Activated B cell treated with CpG ODN at 0.5 μM for 24 hours (primary cell): ENCODE measurements at regions of chr11 and their contacts with region 1.

Region 1: DNA sequence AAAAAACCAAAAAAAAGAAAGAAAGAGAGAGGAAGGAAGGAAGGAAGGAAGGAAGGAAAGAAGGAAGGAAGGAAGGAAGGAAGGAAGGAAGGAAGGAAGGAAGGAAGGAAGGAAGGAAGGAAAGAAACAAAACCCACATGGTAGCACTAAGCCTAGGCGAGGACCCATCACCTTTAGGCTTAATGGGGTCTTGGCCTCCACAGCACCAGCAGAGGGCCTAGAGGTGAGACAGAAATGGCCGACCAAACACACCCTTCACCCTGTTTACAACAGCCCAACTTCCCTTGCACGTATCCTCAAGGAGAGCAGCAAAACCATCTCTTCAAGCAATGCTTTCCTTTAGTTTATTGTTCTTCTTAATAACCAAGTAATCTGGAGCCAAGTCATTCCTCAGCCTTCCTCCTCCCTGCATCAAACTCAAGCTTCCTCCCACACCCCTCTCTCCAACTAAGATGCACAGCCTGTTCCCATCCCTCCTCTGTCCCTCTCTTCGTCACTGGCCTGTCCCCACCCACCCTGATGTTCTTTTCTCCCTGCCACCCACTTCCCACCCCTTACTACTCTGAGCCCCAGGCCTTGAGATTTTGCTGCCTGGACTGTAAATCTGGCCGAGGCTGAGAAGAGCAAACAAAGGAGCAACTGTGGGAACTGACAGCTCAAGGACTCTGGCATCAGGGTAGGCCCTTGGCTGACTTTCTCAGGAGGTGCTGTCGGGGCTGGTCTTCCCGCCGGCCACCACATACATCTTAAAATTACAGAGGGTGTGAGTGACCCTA is 26.0 kb downstream of the POU2AF1 start:
- DNase-seq: no peak
- ATAC-seq: peak; percentile 53
- H3K4me3 Mint-ChIP-seq: no peak overlapping the region
- H3K27ac Mint-ChIP-seq: peak overlapping the region; percentile 83
- H3K4me1 Mint-ChIP-seq: peaks cover 62% of the 10 kb centered on the region
- H3K27me3 Mint-ChIP-seq: no peaks in the 10 kb centered on the region
- CTCF ChIP-seq: no peak

Region 2: GRCh38 chr11:111367411-111368284 is 14.5 kb after region 1 on chr11:
- CTCF ChIA-PET with region 1: interaction called, 3 read pairs
- POLR2A ChIA-PET with region 1: interaction called, 11 read pairs
- intact Hi-C with region 1: loop called (anchors 2 kb)
- DNase-seq: no peak
- ATAC-seq: peak; percentile 51
- H3K4me3 Mint-ChIP-seq: peak overlapping the region; percentile 67
- H3K27ac Mint-ChIP-seq: peak overlapping the region; percentile 98
- H3K4me1 Mint-ChIP-seq: no peaks in the 10 kb centered on the region
- H3K27me3 Mint-ChIP-seq: no peaks in the 10 kb centered on the region
- CTCF ChIP-seq: no peak